Activated CD8-positive, alpha-beta T cell treated with anti-CD3 and anti-CD28 coated beads, Interleukin-2, amount 10 ng/mL, durations not matched to agents 7 days and 5 days (primary cell): ENCODE measurements at regions of chr15 and their contacts with region 1.

Region 1: DNA sequence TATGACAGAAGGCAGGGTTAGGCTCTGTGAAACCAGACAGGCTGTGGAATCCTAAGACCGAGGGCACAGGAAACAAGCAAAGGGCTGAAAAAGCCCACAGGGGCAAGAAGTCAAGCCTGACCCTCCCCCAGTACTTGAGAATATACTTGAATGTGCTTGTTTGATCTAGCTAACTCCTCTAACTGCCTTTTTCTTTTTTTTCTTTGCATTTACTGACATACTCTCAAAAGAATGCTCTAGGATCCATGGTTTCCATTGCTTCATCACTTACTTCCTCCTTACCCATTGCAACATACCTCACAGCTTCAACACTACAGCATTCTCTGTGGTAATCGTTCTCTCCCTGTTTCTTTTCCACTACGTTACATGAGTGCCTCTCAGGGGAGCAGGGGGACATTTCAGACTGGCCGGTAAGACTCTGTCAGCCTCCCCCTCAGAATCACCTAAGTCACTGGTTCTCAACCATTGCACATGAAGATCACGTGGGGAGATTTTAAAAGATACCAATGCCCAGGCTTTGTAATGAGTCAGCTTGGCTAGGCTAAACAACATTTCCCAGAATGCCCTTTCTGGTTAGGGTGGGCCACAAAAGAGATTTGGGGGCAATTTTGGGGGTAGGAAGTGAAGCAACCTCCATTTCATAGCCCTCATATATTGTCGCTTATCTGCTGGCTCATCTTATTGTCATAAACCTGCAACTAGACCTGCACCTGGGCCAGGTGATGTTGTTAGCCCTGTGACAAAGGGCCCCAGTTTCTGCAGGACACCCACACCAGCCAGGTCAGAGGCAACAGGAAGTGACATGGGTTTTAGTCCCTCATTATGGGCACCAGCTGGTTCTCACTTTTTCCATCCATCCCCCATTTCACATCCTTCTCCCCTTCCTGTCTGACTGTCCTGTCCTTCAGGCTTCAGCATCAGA is 24.6 kb upstream of the RSL24D1 start:
- DNase-seq: peak; percentile 65
- ATAC-seq: peak; percentile 66
- H3K4me3 Mint-ChIP-seq: peak overlapping the region; percentile 65
- H3K27ac Mint-ChIP-seq: peak overlapping the region; percentile 96
- H3K4me1 Mint-ChIP-seq: peaks cover 89% of the 10 kb centered on the region
- H3K27me3 Mint-ChIP-seq: no peaks in the 10 kb centered on the region

Region 2: DNA sequence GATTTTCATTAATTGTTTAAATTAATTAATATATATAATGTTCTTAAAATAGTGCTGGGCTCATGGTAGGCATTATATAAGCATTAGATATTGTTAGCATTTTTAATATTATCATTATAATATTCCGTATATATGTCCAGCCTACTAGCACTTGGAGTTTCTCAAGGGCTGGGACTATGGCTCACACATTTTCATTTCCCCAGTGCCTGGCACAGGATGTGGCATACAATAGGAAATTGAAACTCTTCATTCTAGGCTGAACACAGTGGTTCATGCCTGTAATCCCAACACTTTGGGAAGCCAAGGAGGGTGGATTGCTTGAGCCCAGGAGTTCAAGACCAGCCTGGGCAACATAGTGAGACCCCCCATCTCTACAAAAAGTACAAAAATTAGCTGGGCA is 195.0 kb before region 1 on chr15:
- CTCF ChIA-PET with region 1: no interaction called
- POLR2A ChIA-PET with region 1: no interaction called
- DNase-seq: no peak
- ATAC-seq: no peak
- H3K4me3 Mint-ChIP-seq: no peak overlapping the region
- H3K27ac Mint-ChIP-seq: no peak overlapping the region
- H3K4me1 Mint-ChIP-seq: no peaks in the 10 kb centered on the region
- H3K27me3 Mint-ChIP-seq: peaks cover 9% of the 10 kb centered on the region

Region 3: DNA sequence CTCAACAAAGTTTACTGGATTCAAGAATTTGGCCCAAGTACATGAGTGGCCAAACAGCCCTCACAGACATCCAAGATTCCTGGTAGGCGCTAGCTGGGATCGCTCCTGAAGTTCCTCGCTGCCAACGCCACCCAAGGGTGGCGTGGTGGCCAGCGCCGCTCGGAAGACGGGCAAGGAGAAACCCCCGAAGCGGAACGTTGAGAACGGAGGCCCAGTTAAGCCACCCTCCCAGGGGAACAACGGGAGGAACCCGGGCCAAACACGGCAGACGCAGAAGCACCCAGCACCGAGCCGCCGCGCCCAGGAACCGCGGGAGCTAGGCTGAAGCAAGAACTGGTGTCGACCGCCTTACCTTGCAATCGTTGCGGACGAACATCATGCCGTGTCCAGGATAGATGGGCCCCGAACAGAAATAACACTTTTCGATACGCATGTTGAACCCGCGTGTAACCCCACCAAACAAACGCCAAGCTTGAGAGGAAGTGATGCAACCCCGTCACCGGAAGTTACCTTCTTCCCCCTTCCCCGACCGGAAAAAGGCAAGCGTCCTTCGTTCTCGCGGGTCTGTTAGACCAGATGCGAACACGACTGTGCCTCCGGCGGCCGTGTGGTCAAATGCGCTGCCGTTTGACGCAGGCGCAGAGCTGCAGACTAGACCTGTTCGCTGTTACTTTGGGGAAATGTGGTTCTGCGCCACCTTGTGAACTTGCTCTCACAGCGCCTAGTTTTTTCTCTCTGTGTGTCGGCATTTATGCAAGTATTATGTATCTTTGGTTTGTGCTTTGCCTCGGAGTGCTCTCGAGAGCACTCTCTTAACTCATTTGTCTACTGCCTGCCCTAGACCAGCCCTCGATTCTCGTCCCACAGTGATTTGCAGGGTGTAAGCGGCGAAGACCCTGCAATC is 24.6 kb before region 1 on chr15 and contains the start of gene RSL24D1:
- CTCF ChIA-PET with region 1: interaction called, 12 read pairs
- POLR2A ChIA-PET with region 1: interaction called, 8 read pairs
- DNase-seq: peak; percentile 98
- ATAC-seq: peak; percentile 98
- H3K4me3 Mint-ChIP-seq: no peak within 1 kb of the TSS
- H3K27ac Mint-ChIP-seq: no peak within 1 kb of the TSS
- H3K4me1 Mint-ChIP-seq: peaks cover 15% of the 10 kb centered on the region
- H3K27me3 Mint-ChIP-seq: no peaks in the 10 kb centered on the region
- total RNA-seq, gene RSL24D1: 79.6 to 85.2 TPM

Region 4: GRCh38 chr15:55240125-55240760 is 18.9 kb after region 1 on chr15:
- CTCF ChIA-PET with region 1: interaction called, 11 read pairs
- POLR2A ChIA-PET with region 1: no interaction called
- DNase-seq: no peak
- ATAC-seq: peak; percentile 47
- H3K4me3 Mint-ChIP-seq: no peak overlapping the region
- H3K27ac Mint-ChIP-seq: peak overlapping the region; percentile 77
- H3K4me1 Mint-ChIP-seq: peaks cover 76% of the 10 kb centered on the region
- H3K27me3 Mint-ChIP-seq: no peaks in the 10 kb centered on the region

Region 5: DNA sequence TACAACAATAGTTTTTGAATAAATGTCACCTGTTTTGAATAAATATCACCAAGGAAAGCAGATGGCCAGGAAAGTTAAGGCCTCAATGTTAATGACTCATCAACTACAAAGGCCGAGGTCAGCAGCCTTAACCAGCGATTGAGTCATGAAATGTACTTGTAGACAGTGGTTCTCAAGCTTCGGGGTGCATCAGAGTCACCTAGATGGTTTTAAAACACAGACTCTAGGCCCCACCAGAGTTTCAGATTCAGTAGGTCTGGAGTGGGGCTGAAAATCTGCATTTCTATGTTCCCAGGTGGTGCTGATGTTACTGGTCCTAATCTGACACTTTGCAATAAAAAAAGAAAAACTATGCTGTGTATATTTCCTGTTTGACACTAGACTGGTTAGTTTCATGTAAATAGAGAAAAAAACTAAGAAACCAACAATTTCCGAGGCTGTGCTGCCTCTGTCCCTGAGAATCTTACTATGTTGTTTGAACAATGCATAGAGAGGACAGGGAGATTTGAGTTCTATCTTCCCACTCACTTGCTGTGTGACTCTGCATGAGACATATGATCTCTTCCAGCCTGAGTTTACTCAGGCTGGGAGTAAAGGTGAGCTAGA is 58.5 kb after region 1 on chr15:
- CTCF ChIA-PET with region 1: interaction called, 11 read pairs
- POLR2A ChIA-PET with region 1: interaction called, 12 read pairs
- DNase-seq: peak; percentile 66
- ATAC-seq: peak; percentile 79
- H3K4me3 Mint-ChIP-seq: peak overlapping the region; percentile 57
- H3K27ac Mint-ChIP-seq: peak overlapping the region; percentile 97
- H3K4me1 Mint-ChIP-seq: peaks cover 93% of the 10 kb centered on the region
- H3K27me3 Mint-ChIP-seq: no peaks in the 10 kb centered on the region

Region 6: GRCh38 chr15:55290528-55291057 is 69.2 kb after region 1 on chr15:
- CTCF ChIA-PET with region 1: interaction called, 77 read pairs
- POLR2A ChIA-PET with region 1: interaction called, 3 read pairs
- DNase-seq: peak; percentile 89
- ATAC-seq: peak; percentile 78
- H3K4me3 Mint-ChIP-seq: peak overlapping the region; percentile 86
- H3K27ac Mint-ChIP-seq: peak overlapping the region; percentile 86
- H3K4me1 Mint-ChIP-seq: peaks cover 33% of the 10 kb centered on the region
- H3K27me3 Mint-ChIP-seq: no peaks in the 10 kb centered on the region

Region 7: DNA sequence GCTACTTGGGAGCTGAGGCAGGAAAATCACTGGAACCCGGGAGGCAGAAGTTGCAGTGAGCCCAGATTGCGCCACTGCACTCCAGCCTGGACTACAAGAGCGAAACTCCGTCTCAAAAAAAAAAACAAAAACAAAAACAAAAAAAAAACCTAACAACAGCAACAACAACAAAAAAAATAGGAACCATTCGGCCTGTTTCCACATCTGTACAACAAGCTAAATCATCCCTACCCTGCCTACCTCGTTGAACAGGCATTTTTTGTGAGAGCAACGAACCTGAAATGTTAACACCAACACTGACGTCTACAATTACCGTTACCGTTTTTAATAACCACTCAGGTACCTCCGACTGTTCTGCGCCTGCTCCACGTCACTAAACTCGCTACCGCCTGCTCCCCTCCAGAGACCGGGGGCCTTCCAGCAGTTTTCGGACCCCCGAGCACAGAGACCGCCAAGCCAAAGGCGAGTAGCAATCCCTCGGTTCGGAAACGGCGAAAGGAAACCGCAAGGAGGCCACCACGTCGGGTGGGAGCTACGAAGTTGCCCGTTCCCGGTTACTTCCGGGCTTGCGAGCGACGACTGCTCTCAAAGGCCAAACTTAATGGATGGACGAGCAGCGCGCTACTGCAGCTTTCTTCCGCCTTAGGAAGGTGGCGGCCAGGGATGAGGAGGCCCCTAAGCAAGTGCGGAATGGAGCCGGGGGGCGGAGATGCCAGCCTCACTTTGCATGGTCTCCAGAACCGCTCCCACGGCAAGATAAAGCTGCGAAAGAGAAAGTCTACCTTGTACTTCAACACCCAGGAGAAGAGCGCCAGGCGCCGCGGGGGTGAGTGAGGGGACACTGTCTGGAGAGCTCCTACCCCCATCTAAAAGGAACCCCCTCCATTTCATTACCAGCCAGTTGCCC is 97.5 kb after region 1 on chr15 and contains the starts of genes PIGB and PIGBOS1:
- CTCF ChIA-PET with region 1: interaction called, 10 read pairs
- POLR2A ChIA-PET with region 1: interaction called, 8 read pairs
- DNase-seq: peak; percentile 87
- ATAC-seq: peak; percentile 94
- H3K4me3 Mint-ChIP-seq: peak within 1 kb of the TSS; percentile 98
- H3K27ac Mint-ChIP-seq: peak within 1 kb of the TSS; percentile 100
- H3K4me1 Mint-ChIP-seq: peaks cover 55% of the 10 kb centered on the region
- H3K27me3 Mint-ChIP-seq: no peaks in the 10 kb centered on the region
- total RNA-seq, gene PIGB: 16.4 to 23.7 TPM
- total RNA-seq, gene PIGBOS1: 8.9 to 12.2 TPM

Region 8: DNA sequence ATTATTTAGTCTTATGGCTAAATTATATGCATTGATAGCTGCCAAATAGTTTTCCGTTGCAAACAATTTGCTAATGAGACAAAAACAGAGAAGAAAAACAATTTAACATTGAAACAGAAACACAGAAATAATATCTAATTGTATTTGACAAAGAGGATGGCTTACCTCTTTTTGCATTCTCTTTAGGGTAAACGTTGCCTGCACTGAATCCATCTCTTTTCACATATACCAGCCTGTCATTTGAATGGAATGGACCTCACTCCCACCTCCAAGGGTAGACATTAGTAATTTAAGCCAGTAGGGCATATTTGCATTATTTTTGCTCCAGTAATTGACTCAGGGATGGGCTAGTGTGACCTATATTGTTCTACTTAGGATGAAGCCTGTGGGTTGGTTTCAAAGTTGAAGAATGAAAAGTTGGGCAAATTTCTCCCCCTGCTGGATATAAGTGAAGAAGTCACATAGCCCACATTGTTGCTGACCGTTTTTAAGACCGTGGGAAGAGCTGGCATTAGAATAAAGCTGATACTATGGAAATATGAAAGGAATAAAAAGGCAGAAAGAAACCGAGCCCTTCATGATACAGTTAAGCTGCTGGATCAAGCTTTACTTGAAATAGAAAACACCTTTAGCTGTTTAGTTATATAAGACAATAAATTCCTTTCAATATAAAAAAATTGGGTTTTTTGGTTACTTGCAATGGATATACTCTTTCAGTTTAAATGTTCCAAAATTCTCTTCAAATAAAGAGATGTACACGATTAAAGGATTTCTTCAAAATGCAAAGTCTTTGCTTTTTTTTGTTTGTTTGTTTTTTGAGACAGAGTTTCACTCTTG is 213.9 kb after region 1 on chr15:
- CTCF ChIA-PET with region 1: interaction called, 22 read pairs
- POLR2A ChIA-PET with region 1: no interaction called
- DNase-seq: peak; percentile 31
- ATAC-seq: peak; percentile 86
- H3K4me3 Mint-ChIP-seq: no peak overlapping the region
- H3K27ac Mint-ChIP-seq: no peak overlapping the region
- H3K4me1 Mint-ChIP-seq: peaks cover 4% of the 10 kb centered on the region
- H3K27me3 Mint-ChIP-seq: no peaks in the 10 kb centered on the region